ENCODE measurements at regions of chr3 and their contacts with region 1.

Region 1: GRCh38 chr3:134312873-134313846 is 61.1 kb downstream of the AMOTL2 start:
- DNase-seq: peak; percentile 77 to 89
- H3K4me3 ChIP-seq: peak overlapping the region; percentile 53 to 59
- H3K27ac ChIP-seq: peak overlapping the region; percentile 92
- H3K4me1 ChIP-seq: peaks cover 0 to 98% (median 83%) of the 10 kb centered on the region in 4 donors
- H3K27me3 ChIP-seq: no peaks in the 10 kb centered on the region
- CTCF ChIP-seq: peak; percentile 6 to 33

Region 2: DNA sequence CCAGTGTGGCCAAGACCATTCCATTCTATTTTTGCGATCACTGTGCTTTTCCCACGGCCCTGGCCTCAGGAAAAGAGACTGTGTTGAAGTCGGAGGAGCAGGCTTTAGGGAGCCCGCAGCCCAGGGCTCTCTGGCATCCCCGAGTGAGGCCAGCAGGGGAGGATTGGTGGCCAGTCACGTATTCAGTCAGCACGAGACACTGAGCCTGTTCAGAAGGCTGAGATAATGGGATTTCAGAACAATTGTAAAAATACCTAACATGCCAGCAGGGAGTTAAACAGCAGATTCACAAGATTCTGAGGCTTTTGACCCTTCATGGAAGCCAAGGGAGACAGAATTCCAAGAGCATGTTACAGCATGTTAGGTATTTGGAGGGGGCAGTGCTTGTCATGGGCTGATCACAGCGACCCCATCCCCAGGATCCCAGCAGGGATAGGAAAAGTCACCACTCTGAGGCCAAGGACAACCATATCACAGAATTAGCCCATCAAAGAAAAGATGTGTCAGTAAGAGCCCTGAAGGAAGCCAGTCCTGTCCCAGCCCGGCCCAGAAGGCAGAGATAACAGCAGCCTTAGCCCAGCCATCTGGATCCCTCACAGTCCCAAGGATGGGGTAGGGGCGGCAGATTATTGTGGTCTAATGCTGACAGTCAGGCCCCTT is 20.5 kb after region 1 on chr3:
- intact Hi-C with region 1: loop called (anchors 2 kb)
- DNase-seq: peak; percentile 61 to 90
- H3K4me3 ChIP-seq: no peak overlapping the region
- H3K27ac ChIP-seq: peak overlapping the region; percentile 90 to 93
- H3K4me1 ChIP-seq: peaks cover 8 to 94% (median 74%) of the 10 kb centered on the region in 4 donors
- H3K27me3 ChIP-seq: no peaks in the 10 kb centered on the region
- CTCF ChIP-seq: peak; percentile 31 to 44

Region 3: GRCh38 chr3:134373994-134374790 is 61.0 kb after region 1 on chr3 and contains the start of gene AMOTL2:
- intact Hi-C with region 1: loop called (anchors 5 kb)
- DNase-seq: peak; percentile 83 to 93
- H3K4me3 ChIP-seq: peak within 1 kb of the TSS; percentile 90 to 97
- H3K27ac ChIP-seq: peak within 1 kb of the TSS; percentile 98 to 99
- H3K4me1 ChIP-seq: peaks cover 18 to 48% (median 43%) of the 10 kb centered on the region in 4 donors
- H3K27me3 ChIP-seq: no peaks in the 10 kb centered on the region
- CTCF ChIP-seq: no peak

Region 4: GRCh38 chr3:134384963-134385362 is 71.8 kb after region 1 on chr3:
- intact Hi-C with region 1: no loop called
- DNase-seq: no peak
- H3K4me3 ChIP-seq: no peak overlapping the region
- H3K27ac ChIP-seq: no peak overlapping the region
- H3K4me1 ChIP-seq: peaks cover 0 to 27% (median 13%) of the 10 kb centered on the region in 4 donors
- H3K27me3 ChIP-seq: no peaks in the 10 kb centered on the region
- CTCF ChIP-seq: no peak